ENCODE measurements at regions of chr11 and their contacts with region 1.

Region 1: DNA sequence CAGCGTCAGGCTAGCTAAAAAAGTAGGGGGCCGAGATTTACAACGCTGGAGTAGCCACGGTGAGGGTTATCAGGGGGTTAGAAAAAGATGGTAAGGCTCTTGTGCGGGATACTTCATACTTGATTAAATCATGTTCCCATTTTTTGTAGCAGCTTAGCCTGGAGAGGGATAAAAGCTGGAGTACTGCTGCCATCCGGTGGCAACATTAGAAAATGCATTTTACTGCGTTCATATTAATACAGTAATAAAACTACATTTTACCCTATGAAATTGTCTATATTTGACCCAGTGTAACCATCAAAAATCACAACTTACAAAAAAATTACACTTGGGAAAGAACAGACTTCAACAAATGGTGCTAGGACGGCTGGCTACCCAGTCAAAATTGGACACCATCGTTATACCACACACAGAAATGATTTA is 17.3 kb downstream of the RPUSD4 start:
- DNase-seq: peak; percentile 46
- H3K4me3 ChIP-seq: no peak overlapping the region
- H3K27ac ChIP-seq: no peak overlapping the region
- H3K4me1 ChIP-seq: no peaks in the 10 kb centered on the region
- H3K27me3 ChIP-seq: no peaks in the 10 kb centered on the region
- CTCF ChIP-seq: peak; percentile 57

Region 2: GRCh38 chr11:125923012-125923579 is 271.0 kb before region 1 on chr11:
- intact Hi-C with region 1: loop called (anchors 2 kb)
- DNase-seq: peak; percentile 78
- H3K4me3 ChIP-seq: no peak overlapping the region
- H3K27ac ChIP-seq: no peak overlapping the region
- H3K4me1 ChIP-seq: no peaks in the 10 kb centered on the region
- H3K27me3 ChIP-seq: no peaks in the 10 kb centered on the region
- CTCF ChIP-seq: peak; percentile 74

Region 3: DNA sequence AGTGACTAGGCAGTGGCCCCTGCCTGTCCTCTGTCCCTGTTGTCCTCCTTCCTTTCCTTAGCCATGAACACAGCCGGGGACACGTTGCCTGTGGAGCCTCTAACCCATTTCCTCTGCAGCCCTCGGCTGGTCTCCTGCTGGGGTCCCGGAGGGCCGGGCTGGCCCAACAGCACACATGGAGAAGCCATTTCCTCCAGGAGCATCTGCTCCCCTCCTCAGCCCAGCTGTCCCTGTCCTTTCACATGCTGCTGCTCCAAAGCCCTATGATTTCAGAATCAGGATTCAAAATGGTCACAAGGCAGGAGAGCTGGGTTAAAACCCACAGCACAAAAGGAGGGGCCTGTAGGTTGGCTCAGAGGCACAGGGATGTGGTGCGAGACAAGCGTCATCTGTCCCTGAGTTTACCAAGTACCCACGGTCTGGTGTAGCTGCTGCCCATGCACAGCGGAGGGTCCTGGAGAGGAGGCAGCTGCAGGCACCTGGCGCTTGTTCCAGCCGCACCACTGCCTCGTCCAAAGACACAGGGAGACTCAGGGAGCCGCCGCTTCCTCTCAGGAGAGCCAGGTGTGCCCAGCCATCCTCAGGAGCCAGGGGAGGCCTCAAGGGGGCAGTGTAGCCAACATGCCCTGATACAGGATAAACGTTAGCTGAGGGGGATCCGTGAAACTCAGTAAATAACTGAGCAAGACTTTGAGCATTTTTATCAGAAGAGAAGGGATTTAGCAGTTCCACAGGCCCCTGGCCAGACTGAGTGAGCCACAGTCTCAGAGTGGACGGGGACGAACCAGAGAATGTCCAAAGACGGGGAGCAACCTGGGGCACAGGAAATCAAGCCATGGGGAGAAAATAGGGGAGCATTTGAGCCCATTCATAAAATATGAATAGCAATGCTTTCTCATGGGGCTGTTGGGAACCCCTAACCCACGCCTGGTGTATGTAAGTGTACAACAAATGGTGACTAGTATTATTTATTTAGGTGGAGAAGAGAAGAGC is 252.2 kb before region 1 on chr11:
- intact Hi-C with region 1: loop called (anchors 5 kb)
- DNase-seq: peak; percentile 58
- H3K4me3 ChIP-seq: no peak overlapping the region
- H3K27ac ChIP-seq: no peak overlapping the region
- H3K4me1 ChIP-seq: no peaks in the 10 kb centered on the region
- H3K27me3 ChIP-seq: no peaks in the 10 kb centered on the region
- CTCF ChIP-seq: peak; percentile 62

Region 4: GRCh38 chr11:126062679-126063506 is 131.2 kb before region 1 on chr11 and contains the start of gene CDON:
- intact Hi-C with region 1: loop called (anchors 5 kb)
- DNase-seq: peak; percentile 91
- H3K4me3 ChIP-seq: peak within 1 kb of the TSS; percentile 63
- H3K27ac ChIP-seq: peak within 1 kb of the TSS; percentile 24
- H3K4me1 ChIP-seq: no peaks in the 10 kb centered on the region
- H3K27me3 ChIP-seq: no peaks in the 10 kb centered on the region
- CTCF ChIP-seq: no peak
- total RNA-seq, gene CDON: 2.3 to 10.5 TPM

Region 5: DNA sequence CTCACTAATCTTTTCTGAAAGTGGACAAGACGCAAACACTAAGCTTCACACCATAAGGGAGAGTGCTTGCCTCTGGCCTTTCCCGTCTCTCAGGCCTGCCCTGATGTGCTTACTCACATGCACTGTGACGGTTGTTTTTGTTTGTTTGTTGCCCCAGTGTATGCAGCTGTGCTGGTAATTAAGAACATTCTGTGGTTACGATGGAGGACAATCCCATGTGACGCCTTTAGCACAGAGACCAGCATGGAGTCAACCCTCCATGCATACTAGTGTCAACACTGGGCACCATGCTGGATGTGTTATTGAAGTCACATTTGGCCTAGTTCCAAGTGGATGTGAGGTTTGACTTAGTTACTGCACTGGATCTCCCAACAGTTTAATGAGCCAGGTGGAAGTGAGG is 103.7 kb before region 1 on chr11:
- intact Hi-C with region 1: no loop called
- DNase-seq: no peak
- H3K4me3 ChIP-seq: no peak overlapping the region
- H3K27ac ChIP-seq: no peak overlapping the region
- H3K4me1 ChIP-seq: no peaks in the 10 kb centered on the region
- H3K27me3 ChIP-seq: no peaks in the 10 kb centered on the region
- CTCF ChIP-seq: no peak

Region 6: DNA sequence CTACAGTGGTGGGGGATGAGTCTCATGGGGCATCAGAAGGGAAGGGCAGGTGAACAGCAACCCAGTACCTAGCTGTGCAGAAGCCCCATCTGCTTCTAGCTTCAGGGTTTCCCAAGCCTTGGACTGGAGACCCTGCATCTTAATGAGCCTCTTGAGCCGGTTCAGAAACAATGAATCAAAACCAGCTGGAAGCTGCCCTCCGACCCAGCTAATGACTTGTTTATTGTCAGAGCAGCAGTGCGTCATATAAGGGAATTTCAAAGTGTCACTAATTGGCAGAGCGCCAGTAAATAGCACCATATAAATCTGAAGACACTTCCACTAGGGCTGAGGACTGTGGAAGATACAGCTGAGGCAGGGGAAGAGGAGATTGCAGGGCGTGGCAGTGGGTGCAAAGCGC is 40.2 kb before region 1 on chr11:
- intact Hi-C with region 1: no loop called
- DNase-seq: no peak
- H3K4me3 ChIP-seq: no peak overlapping the region
- H3K27ac ChIP-seq: no peak overlapping the region
- H3K4me1 ChIP-seq: no peaks in the 10 kb centered on the region
- H3K27me3 ChIP-seq: no peaks in the 10 kb centered on the region
- CTCF ChIP-seq: no peak

Region 7: DNA sequence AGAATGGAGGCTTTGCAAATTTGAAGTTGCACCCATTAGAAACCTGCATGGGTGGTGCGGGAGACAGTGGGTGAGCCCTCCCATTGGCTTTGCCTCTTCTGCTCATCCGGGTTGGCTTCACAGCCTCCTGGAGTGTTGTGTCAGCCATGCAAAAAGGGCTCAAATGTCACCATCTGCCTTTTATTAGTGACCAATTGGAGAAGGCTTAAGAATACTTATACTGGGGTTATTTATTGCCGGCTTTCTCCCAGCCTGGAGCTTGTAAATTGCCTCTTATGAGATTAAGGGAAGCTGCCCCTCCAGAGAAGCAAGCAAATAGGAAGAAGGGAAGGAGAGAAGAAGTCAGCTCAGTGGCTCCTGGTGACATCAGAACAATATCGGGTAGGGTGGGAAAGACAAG is 343.9 kb after region 1 on chr11:
- intact Hi-C with region 1: no loop called
- DNase-seq: no peak
- H3K4me3 ChIP-seq: no peak overlapping the region
- H3K27ac ChIP-seq: no peak overlapping the region
- H3K4me1 ChIP-seq: no peaks in the 10 kb centered on the region
- H3K27me3 ChIP-seq: no peaks in the 10 kb centered on the region
- CTCF ChIP-seq: no peak